HAP-1 (cell line): ENCODE measurements at regions of chrX and their contacts with region 1.

Region 1: GRCh38 chrX:154980330-154981096 is 42.0 kb downstream of the F8 start:
- DNase-seq: peak; percentile 63 to 88
- H3K4me3 ChIP-seq: no peak overlapping the region
- H3K4me1 ChIP-seq: no peaks in the 10 kb centered on the region
- H3K27me3 ChIP-seq: no peaks in the 10 kb centered on the region

Region 2: GRCh38 chrX:155056877-155057792 is 76.6 kb after region 1 on chrX:
- in situ Hi-C with region 1: loop called (anchors 5 kb)
- DNase-seq: peak; percentile 77 to 82
- H3K4me3 ChIP-seq: no peak overlapping the region
- H3K4me1 ChIP-seq: peaks cover 8% of the 10 kb centered on the region
- H3K27me3 ChIP-seq: no peaks in the 10 kb centered on the region